ENCODE measurements at regions of chr10 and their contacts with region 1.

Region 1: GRCh38 chr10:114550756-114551635 is 107.1 kb downstream of the ABLIM1 start:
- DNase-seq: no peak
- H3K4me3 Mint-ChIP-seq: no peak overlapping the region
- H3K27ac Mint-ChIP-seq: no peak overlapping the region
- H3K4me1 Mint-ChIP-seq: peaks cover 23% of the 10 kb centered on the region
- H3K27me3 Mint-ChIP-seq: no peaks in the 10 kb centered on the region

Region 2: DNA sequence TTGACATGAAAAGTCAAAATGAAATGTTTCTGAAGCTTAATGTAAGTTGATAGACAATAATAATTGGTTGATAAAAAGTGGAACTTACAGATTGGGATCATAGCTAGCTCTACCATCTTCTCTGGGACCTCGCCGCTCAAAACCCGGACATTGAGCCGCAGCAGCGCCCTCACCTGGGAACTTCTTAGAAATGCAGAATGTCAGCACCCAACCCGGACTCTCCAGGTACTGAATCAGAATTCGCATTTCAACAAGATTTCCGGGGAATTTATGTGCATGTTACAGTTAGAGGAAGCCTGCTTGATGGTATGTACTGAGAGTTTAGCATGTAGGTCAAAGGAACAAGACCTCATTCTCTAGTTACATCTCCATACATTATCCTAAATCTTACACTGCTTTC is 143.8 kb after region 1 on chr10:
- CTCF ChIA-PET with region 1: interaction called, 16 read pairs
- POLR2A ChIA-PET with region 1: no interaction called
- DNase-seq: peak; percentile 37
- H3K4me3 Mint-ChIP-seq: no peak overlapping the region
- H3K27ac Mint-ChIP-seq: no peak overlapping the region
- H3K4me1 Mint-ChIP-seq: peaks cover 13% of the 10 kb centered on the region
- H3K27me3 Mint-ChIP-seq: peaks cover 22% of the 10 kb centered on the region

Region 3: DNA sequence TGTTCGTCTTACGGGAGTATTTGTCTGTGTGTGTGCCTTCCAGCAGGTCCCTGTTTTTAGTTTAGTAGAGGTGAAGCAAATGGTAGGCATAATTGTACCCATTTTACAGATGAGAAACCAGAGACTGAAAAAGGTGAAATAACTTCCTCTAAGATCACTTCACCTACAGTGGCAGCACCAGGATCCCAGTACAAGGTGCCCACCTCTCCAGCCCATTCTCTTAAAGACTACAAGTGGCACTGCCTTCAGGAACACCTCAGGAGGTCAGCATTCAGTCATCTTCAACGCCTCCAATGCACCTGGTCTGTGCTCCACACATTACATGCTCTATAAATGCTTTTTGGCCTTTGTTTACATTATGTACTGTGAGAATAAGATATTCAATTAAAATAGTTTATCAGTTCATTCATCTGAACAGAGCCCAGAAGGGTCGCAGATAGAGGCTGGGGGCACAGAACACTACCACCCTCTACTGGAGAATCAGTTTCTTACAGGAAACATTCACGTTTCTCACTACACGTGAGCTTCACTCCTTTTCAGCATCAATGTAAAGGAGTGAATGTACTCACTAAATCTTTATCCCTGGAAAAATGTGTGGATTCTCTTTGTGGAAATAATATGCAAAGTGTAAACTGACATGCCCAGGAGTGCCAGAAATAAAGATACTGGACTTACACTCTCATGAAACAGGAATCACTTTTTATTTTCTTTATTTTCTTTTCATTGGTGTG is 152.5 kb after region 1 on chr10:
- CTCF ChIA-PET with region 1: interaction called, 12 read pairs
- POLR2A ChIA-PET with region 1: no interaction called
- DNase-seq: no peak
- H3K4me3 Mint-ChIP-seq: no peak overlapping the region
- H3K27ac Mint-ChIP-seq: no peak overlapping the region
- H3K4me1 Mint-ChIP-seq: no peaks in the 10 kb centered on the region
- H3K27me3 Mint-ChIP-seq: peaks cover 35% of the 10 kb centered on the region

Measured in activated CD4-positive, alpha-beta memory T cell treated with anti-CD3 and anti-CD28 coated beads, Interleukin-2, amount 10 ng/mL, durations not matched to agents 7 days and 5 days (primary cell).